Ascending aorta (tissue), 2 donors: ENCODE measurements at regions of chr7 and their contacts with region 1.

Region 1: DNA sequence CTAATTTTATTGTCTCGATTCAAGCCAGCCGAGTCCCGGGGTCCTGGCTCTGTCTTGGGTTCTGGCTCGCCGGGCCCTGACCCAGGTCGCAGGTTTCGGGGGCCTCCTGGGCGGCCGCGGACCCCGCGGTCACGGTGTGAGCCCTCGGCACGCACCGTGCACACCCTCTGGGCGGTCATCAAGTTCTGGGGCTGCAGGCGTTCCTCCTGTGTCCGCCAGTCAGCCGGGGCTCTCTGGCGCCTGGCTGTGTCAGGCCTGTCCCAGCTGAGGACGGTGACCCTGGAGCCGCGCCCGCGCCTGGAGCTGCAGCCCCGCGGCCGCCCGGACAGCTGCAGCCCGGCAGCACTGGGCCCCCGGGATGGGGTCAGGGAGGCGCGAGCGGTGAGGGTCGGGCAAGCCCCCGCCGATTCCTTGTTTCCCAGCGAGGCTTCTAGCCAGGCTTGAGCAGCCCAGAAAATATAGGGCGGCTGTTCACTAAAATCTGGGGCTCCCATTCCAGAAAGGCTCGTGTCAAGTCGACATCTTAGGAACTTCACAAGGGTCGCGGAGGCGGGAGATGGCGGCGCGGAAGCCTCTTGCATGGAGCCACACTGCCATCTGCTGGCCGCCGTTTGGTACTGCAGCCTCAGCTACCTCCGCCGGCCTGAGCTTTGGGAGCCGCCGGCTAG is 4.2 kb upstream of the HOXA7 start:
- DNase-seq: peak in 1 of 2 donors; percentile 93
- H3K4me3 ChIP-seq: peak overlapping the region; percentile 47 to 72
- H3K27ac ChIP-seq: peak overlapping the region in 1 of 2 donors; percentile 51
- H3K4me1 ChIP-seq: no peaks in the 10 kb centered on the region
- H3K27me3 ChIP-seq: peaks cover 11% of the 10 kb centered on the region
- CTCF ChIP-seq: peak; percentile 97 to 100 (median 99)

Region 2: DNA sequence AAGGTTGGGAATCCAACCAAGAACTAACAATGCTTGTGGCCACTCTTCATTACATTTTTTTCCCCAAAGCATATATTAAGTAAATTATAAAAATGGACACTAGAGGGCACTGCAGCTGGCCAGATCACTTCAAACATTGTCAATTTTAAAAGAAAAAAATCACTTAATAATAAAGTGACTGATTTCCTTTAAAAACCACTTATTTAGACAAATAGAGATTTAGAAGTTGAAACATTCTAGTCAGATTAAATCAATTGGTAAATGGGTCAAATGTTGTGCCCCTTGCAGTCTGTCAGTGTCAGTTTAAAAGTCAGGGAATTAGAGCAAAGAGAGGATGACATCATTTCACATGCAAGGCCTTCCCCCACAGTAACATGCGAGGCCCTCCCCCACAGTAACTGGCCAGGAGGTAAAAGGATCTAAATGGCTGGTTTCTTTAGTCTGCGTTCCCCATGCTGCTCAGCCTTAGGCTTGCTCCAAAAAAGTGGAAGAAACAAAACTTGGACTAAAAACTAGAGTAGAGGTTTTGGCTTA is 474.2 kb before region 1 on chr7:
- intact Hi-C with region 1: loop called (anchors 2 kb)
- DNase-seq: peak in 1 of 2 donors; percentile 65
- H3K4me3 ChIP-seq: no peak overlapping the region
- H3K27ac ChIP-seq: no peak overlapping the region
- H3K4me1 ChIP-seq: no peaks in the 10 kb centered on the region
- H3K27me3 ChIP-seq: no peaks in the 10 kb centered on the region
- CTCF ChIP-seq: peak; percentile 55 to 70 (median 64)